ENCODE measurements at regions of chr15 and their contacts with region 1.

Region 1: DNA sequence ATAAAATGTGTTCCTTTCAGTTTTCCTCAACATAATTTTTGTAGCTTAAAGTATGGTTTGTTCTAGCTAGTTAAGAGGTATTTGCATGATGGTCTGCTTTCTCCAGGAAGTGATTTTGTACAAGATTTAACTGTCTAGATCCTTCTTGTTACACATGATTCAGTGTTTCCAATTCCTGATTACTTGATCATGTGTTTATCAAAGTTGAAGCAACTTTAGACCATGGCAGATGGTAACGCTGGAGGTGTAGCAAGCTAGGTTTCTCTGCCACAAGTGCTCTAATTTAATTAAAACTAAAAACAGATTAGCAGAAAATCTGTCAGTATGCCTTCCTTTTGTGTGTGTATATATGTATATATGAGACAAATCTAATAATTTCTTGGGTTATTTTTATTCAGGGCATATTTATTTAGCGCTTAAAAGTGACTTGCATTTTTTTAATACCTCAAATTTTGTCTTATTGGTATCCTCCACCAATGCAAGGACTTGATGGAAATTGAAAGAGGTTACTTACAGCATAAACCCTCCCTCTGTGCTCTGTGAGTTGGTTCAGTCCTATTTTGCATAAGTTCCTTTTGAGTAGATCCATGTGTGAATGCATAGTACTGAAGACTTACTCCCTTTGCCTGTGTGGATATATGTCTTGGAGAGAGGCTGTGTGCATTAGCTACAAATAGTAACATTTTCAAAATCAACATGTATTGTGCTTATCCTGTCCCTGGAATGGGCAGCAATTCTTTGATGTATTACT is 157.3 kb upstream of the CGNL1 start:
- DNase-seq: peak; percentile 97
- H3K4me3 ChIP-seq: peak overlapping the region; percentile 58
- H3K27ac ChIP-seq: peak overlapping the region; percentile 77
- H3K4me1 ChIP-seq: peaks cover 60% of the 10 kb centered on the region
- H3K27me3 ChIP-seq: no peaks in the 10 kb centered on the region
- CTCF ChIP-seq: no peak

Region 2: GRCh38 chr15:56901931-56902330 is 317.1 kb before region 1 on chr15:
- CTCF ChIA-PET with region 1: no interaction called
- POLR2A ChIA-PET with region 1: no interaction called
- intact Hi-C with region 1: loop called (anchors 5 kb)
- DNase-seq: peak; percentile 91
- H3K4me3 ChIP-seq: no peak overlapping the region
- H3K27ac ChIP-seq: peak overlapping the region; percentile 83
- H3K4me1 ChIP-seq: peaks cover 16% of the 10 kb centered on the region
- H3K27me3 ChIP-seq: no peaks in the 10 kb centered on the region
- CTCF ChIP-seq: no peak

Region 3: DNA sequence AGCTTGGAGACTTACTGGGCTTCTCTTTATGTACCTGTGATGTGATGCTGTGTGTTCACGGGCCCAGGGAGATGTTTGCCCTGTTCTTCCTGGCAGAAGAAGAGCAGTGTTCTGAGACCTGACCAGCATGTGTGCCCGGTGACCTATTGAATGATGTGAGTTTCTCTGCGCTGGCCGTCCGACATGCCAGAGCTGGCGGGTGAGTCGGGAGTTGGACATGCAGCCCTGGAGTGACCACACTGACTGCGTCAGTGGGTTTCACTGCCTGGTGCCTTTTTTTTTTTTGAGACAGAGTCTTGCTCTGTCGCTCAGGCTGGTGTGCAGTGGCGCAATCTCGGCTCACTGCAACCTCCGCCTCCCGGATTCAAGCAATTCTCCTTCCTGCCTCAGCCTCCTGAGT is 199.7 kb after region 1 on chr15:
- CTCF ChIA-PET with region 1: no interaction called
- POLR2A ChIA-PET with region 1: no interaction called
- intact Hi-C with region 1: no loop called
- DNase-seq: no peak
- H3K4me3 ChIP-seq: no peak overlapping the region
- H3K27ac ChIP-seq: no peak overlapping the region
- H3K4me1 ChIP-seq: no peaks in the 10 kb centered on the region
- H3K27me3 ChIP-seq: no peaks in the 10 kb centered on the region
- CTCF ChIP-seq: no peak